ENCODE measurements at regions of chr5 and their contacts with region 1.

Region 1: DNA sequence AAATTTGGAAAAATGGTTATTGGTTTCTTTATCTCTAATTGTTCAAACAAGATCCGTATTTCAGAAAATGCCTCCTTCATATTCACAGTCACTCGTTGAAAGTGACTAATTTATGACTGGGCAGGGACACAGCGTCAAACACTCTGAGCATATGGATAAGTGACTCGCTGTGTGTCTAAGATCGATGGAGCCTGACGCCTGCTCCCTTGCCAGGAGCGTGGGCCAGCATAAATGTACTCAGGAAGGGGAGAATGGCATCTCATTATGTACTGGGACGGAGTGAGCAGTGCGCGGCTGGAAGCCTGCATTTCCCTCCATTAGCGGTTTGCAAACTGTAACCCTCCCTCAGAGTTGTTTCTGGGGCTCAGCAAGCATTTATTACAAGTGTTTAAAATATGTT is 79.8 kb upstream of the CAST start:
- DNase-seq: no peak
- ATAC-seq: no peak
- H3K4me3 ChIP-seq: no peak overlapping the region
- H3K27ac ChIP-seq: no peak overlapping the region
- H3K4me1 ChIP-seq: no peaks in the 10 kb centered on the region
- H3K27me3 ChIP-seq: no peaks in the 10 kb centered on the region
- CTCF ChIP-seq: no peak
- EP300 ChIP-seq: no peak
- POLR2A ChIP-seq: no peak
- RAD21 ChIP-seq: no peak

Region 2: GRCh38 chr5:96566833-96567587 is 15.3 kb before region 1 on chr5:
- CTCF ChIA-PET with region 1: no interaction called
- POLR2A ChIA-PET with region 1: no interaction called
- RAD21 ChIA-PET with region 1: no interaction called
- SMC1A ChIA-PET with region 1: no interaction called
- in situ Hi-C with region 1: no loop called
- intact Hi-C with region 1: no loop called
- DNase-seq: no peak
- ATAC-seq: peak; percentile 48
- H3K4me3 ChIP-seq: no peak overlapping the region
- H3K27ac ChIP-seq: no peak overlapping the region
- H3K4me1 ChIP-seq: peaks cover 9% of the 10 kb centered on the region
- H3K27me3 ChIP-seq: no peaks in the 10 kb centered on the region
- CTCF ChIP-seq: no peak
- EP300 ChIP-seq: no peak
- POLR2A ChIP-seq: no peak
- RAD21 ChIP-seq: no peak

Region 3: DNA sequence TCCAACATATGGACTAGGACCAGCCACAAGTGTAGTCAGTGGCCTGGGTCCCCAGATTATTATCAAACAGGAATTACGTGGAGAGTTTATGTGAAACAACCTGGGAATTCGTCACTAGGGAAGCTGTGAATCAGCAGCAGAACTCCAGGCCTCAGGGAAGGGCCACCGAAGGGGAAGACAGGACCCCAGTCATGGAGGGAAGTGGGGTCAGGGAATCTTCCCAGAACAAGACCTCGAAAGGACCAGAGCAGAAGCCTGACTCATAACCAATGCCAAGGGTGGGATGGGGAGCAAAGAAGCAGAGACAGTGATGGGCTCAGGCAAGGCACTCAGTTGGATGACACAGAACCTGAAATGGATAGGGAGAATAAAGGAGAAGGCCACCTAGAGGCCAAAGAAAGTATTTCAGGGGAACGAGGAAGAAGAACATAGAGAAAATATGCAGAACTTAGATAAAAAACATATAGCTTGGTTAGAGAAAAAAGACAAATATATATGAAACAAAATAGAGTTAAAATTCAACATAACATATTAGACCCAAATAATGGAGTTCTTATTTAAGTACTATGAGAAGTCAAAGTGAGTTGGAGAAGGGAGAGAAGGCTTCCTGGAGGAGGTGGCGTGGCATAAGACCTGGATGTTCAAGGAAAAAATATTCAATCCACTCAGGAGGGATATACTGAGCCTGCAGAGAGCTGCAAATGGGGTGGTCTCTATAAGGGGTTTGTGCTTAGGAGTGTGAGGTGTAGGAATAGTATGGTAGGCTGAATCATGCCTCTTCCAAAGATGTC is 13.2 kb after region 1 on chr5:
- CTCF ChIA-PET with region 1: interaction called, 11 read pairs
- POLR2A ChIA-PET with region 1: no interaction called
- RAD21 ChIA-PET with region 1: no interaction called
- SMC1A ChIA-PET with region 1: interaction called, 3 read pairs
- in situ Hi-C with region 1: no loop called
- intact Hi-C with region 1: no loop called
- DNase-seq: no peak
- ATAC-seq: peak; percentile 75
- H3K4me3 ChIP-seq: no peak overlapping the region
- H3K27ac ChIP-seq: no peak overlapping the region
- H3K4me1 ChIP-seq: no peaks in the 10 kb centered on the region
- H3K27me3 ChIP-seq: no peaks in the 10 kb centered on the region; a peak in 1 of 4 replicates
- CTCF ChIP-seq: peak; percentile 40 to 75 (median 57)
- EP300 ChIP-seq: no peak
- POLR2A ChIP-seq: no peak
- RAD21 ChIP-seq: peak; percentile 50

Region 4: GRCh38 chr5:96601811-96602244 is 19.5 kb after region 1 on chr5:
- CTCF ChIA-PET with region 1: interaction called, 22 read pairs
- POLR2A ChIA-PET with region 1: no interaction called
- RAD21 ChIA-PET with region 1: no interaction called
- SMC1A ChIA-PET with region 1: interaction called, 3 read pairs
- in situ Hi-C with region 1: no loop called
- intact Hi-C with region 1: no loop called
- DNase-seq: peak; percentile 16
- ATAC-seq: peak; percentile 96
- H3K4me3 ChIP-seq: no peak overlapping the region
- H3K27ac ChIP-seq: no peak overlapping the region
- H3K4me1 ChIP-seq: no peaks in the 10 kb centered on the region
- H3K27me3 ChIP-seq: no peaks in the 10 kb centered on the region
- CTCF ChIP-seq: peak; percentile 71 to 83 (median 77)
- EP300 ChIP-seq: no peak
- POLR2A ChIP-seq: no peak
- RAD21 ChIP-seq: peak; percentile 62